PC-9 (cell line): ENCODE measurements at regions of chr16 and their contacts with region 1.

Region 1: GRCh38 chr16:81366316-81366932 is 51.7 kb downstream of the GAN start:
- DNase-seq: no peak
- H3K4me3 ChIP-seq: no peak overlapping the region
- H3K27ac ChIP-seq: no peak overlapping the region
- H3K4me1 ChIP-seq: no peaks in the 10 kb centered on the region
- H3K27me3 ChIP-seq: no peaks in the 10 kb centered on the region
- CTCF ChIP-seq: peak; percentile 91

Region 2: DNA sequence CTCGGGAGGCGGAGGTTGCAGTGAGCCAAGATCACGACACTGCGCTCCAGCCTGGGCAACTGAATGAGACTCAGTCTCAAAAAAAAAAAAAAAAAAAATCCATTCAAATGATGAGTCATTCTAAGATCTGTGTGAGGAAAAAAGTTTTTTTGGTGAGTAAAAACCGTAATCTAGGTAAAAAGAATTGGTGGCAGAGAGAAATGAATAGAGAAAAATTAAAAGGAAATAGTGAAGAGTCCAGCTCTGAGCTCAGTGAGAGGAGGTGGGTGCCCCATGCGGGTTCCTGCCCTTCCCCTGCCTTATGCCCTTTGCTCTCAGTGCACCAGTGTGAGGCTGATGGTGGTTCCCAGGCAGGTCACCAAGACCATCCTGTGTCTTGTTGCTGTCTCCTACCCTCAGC is 30.8 kb before region 1 on chr16:
- CTCF ChIA-PET with region 1: no interaction called
- POLR2A ChIA-PET with region 1: no interaction called
- intact Hi-C with region 1: no loop called
- DNase-seq: no peak
- H3K4me3 ChIP-seq: no peak overlapping the region
- H3K27ac ChIP-seq: no peak overlapping the region
- H3K4me1 ChIP-seq: no peaks in the 10 kb centered on the region
- H3K27me3 ChIP-seq: no peaks in the 10 kb centered on the region
- CTCF ChIP-seq: no peak

Region 3: DNA sequence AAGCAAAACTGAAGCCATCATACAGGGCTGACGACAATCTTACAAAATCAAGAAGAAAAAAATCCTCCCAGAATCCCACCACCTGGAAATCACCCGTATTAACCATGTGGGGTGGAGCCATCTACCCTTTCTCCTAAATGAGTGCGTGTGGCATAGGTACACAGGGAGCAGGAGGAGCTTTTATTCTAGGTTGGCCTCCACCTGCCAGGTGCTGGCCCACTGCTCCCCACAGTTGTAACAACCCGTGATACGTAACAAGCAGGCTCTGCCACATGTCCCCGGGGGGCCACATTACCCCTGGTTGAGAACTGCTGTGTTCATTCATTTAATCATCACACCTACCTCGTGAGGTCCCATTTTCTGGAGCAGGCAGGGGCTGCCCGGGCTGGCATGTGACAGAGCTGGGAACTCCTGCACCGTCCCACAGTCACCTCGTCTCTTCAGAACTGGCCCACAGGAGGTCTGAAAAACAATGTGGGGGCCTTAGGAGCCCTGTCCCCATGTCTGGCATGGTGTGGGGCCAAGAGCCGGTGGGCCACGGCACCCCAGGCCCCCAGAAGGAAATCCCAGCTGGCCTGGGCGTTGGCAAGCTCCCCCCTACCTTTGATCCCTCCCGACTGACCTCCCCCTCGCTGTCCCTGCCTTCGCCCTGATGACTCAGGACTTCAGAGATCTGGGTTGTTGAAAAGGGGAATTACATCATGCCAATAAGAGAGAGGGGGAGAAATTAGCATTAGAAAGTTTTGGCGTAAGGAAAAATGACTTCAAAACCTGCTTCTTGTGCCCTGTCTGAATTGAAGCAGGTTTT is 91.1 kb after region 1 on chr16:
- CTCF ChIA-PET with region 1: no interaction called
- POLR2A ChIA-PET with region 1: no interaction called
- intact Hi-C with region 1: no loop called
- DNase-seq: no peak
- H3K4me3 ChIP-seq: no peak overlapping the region
- H3K27ac ChIP-seq: no peak overlapping the region
- H3K4me1 ChIP-seq: no peaks in the 10 kb centered on the region; the same call in 1 of the 2 replicates
- H3K27me3 ChIP-seq: no peaks in the 10 kb centered on the region
- CTCF ChIP-seq: no peak

Region 4: GRCh38 chr16:81711657-81712319 is 345.4 kb after region 1 on chr16:
- CTCF ChIA-PET with region 1: interaction called, 17 read pairs
- POLR2A ChIA-PET with region 1: no interaction called
- intact Hi-C with region 1: no loop called
- DNase-seq: peak; percentile 85 to 91
- H3K4me3 ChIP-seq: no peak overlapping the region
- H3K27ac ChIP-seq: no peak overlapping the region
- H3K4me1 ChIP-seq: peaks cover 27% of the 10 kb centered on the region
- H3K27me3 ChIP-seq: no peaks in the 10 kb centered on the region
- CTCF ChIP-seq: no peak

Region 5: GRCh38 chr16:81723098-81723723 is 356.8 kb after region 1 on chr16:
- CTCF ChIA-PET with region 1: interaction called, 5 read pairs
- POLR2A ChIA-PET with region 1: no interaction called
- intact Hi-C with region 1: loop called (anchors 1 kb)
- DNase-seq: peak; percentile 38 to 74
- H3K4me3 ChIP-seq: no peak overlapping the region
- H3K27ac ChIP-seq: no peak overlapping the region
- H3K4me1 ChIP-seq: no peaks in the 10 kb centered on the region
- H3K27me3 ChIP-seq: no peaks in the 10 kb centered on the region
- CTCF ChIP-seq: peak; percentile 80

Region 6: DNA sequence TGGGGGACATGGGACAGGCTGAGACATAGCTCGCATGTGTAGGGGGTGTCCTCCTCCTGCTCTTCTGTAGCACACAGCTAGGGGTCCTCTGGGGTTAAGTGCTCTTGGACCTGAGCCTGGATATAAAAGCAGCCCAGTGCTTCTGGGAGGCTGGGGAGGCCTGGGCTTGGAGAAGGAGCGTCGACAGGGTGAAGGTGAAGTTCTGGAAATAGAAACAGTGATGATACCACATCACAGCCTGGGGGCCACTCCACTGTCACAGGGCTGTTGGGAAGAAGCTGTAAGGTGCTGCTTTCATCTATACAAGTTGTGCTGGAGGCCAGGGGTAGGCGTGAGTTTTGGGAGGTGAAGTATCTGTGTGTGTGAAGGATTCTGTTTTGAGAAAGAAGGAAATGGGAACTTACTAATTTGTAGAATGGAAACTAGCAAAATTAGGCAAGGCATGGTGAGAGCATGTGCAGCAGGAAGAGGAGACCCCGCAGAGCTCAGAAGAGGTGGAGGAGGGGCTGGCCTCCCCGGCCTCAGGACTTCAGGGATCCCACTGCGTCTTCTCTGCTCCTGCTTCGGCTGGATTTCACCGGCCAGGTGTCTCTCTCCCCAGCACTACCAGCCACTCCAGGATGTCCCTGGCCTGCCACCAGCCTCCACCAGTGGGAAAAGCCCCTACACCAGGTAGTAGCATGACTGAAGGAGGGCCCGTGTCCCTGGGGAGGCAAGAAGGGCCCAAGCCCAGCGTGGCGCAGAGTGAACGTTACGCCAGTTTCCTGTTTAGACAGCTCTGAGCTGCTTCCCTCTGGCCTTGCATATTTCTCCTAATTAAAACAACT is 432.1 kb after region 1 on chr16:
- CTCF ChIA-PET with region 1: no interaction called
- POLR2A ChIA-PET with region 1: no interaction called
- intact Hi-C with region 1: no loop called
- DNase-seq: no peak
- H3K4me3 ChIP-seq: no peak overlapping the region
- H3K27ac ChIP-seq: no peak overlapping the region
- H3K4me1 ChIP-seq: no peaks in the 10 kb centered on the region
- H3K27me3 ChIP-seq: no peaks in the 10 kb centered on the region
- CTCF ChIP-seq: no peak

Region 7: DNA sequence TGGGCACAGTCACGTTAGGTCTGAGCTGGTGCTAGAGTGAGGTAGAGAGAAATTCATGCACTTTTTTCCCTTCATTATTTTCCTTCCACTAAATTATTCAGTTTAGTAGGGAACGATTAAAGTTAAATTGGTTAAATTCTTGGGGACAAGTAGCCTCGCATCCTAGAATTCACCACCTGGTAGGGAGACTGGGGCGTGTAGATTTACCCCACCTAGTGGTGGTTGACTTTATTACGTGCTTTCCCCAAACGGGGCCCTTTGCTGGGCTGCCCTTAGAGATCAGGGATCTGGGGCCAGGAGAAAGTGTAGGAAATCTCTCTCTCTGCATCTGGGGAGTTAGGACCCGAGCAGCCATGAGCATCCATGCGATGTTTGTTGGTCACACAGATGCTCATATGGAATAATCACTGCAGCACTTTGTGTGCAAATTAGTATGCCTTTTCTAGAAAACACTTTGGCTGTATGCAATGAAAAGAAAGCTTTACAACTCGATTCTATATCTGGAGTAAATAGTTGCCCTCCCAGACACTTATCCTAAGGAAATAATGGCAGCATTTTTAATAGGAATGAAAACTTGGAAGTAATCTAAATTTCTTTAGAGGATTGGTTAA is 519.7 kb after region 1 on chr16:
- CTCF ChIA-PET with region 1: no interaction called
- POLR2A ChIA-PET with region 1: no interaction called
- intact Hi-C with region 1: loop called (anchors 5 kb)
- DNase-seq: peak in 1 of 2 experiments; percentile 37
- H3K4me3 ChIP-seq: no peak overlapping the region
- H3K27ac ChIP-seq: no peak overlapping the region
- H3K4me1 ChIP-seq: 0 out of 2 replicates have a peak, but pooled peaks cover 12% of the 10 kb centered on the region
- H3K27me3 ChIP-seq: no peaks in the 10 kb centered on the region
- CTCF ChIP-seq: peak; percentile 80